ENCODE measurements at regions of chr3 and their contacts with region 1.

Region 1: GRCh38 chr3:123700791-123701722 is 116.2 kb upstream of the HACD2 start:
- ATAC-seq: peak in 6 of 8 experiments; percentile 12 to 75 (median 74)
- H3K4me3 ChIP-seq: no peak overlapping the region
- H3K27ac ChIP-seq: no peak overlapping the region
- H3K4me1 ChIP-seq: peaks cover 12% of the 10 kb centered on the region in 2 donors

Region 2: DNA sequence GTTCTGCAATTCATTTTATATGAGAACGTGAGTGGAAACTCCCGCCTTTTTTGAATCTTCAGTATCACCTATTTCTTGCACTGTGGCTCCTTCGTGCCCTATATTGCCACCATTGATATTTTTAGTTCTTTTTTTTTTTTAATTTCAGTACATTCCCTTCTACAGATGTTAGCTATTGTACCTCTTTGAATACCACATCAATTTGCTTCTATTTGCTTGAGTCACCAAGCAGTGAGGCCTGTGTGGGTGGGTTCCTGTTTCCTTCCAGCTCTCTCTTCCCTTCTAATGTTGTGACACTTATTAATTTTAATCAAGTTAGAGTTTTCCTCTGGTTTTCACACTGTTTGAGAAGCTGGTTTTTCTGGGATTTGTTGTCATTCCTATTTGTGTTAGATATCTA is 124.9 kb before region 1 on chr3:
- in situ Hi-C with region 1: no loop called
- ATAC-seq: peak in 1 of 8 experiments; percentile 25
- H3K4me3 ChIP-seq: no peak overlapping the region
- H3K27ac ChIP-seq: no peak overlapping the region
- H3K4me1 ChIP-seq: no peaks in the 10 kb centered on the region

Region 3: DNA sequence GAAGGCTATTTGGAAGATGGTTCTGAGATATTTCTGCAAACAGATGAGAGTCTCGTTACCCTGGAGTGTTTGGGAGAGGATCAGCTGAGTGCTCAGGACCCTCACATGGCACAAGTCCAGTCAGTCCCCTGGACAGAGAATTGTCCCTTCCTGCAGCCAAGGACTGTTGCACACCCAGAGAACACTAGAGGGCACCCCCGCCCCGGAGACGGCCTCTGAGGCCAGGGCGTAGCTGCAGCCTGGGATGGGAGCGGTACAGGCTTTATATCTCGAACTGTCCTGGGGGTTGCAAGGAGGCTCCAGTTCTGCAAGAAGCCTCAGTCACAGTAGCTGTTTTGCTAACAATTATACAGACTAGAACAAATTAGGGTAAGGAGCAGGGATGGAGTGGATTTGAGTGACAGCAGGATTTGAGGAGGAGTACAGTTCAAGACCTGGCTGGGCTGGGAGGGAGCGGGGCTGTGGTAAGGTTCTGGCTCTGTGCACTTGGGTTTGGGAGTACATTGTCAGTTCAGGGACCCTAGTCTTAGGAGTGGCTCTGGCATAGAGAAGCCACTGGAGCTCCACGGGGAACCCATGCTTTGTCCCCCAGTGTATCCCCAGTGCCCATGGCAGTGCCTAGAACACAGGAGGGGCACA is 48.6 kb before region 1 on chr3:
- in situ Hi-C with region 1: loop called in 1 of 9 experiments (anchors 10 kb)
- ATAC-seq: peak; percentile 85 to 93 (median 90)
- H3K4me3 ChIP-seq: no peak overlapping the region
- H3K27ac ChIP-seq: peak overlapping the region in 1 of 2 donors; percentile 72
- H3K4me1 ChIP-seq: peaks cover 21 to 24% of the 10 kb centered on the region in 2 donors